ENCODE measurements at regions of chr11 and their contacts with region 1.

Region 1: GRCh38 chr11:6362873-6363678 is 27.2 kb upstream of the SMPD1 start:
- DNase-seq: peak; percentile 79 to 90 (median 87)
- ATAC-seq: peak; percentile 89 to 92 (median 92)
- H3K4me3 ChIP-seq: peak overlapping the region in 4 of 12 donors; percentile 18 to 31 (median 24)
- H3K27ac ChIP-seq: peak overlapping the region; percentile 66 to 97 (median 78)
- H3K4me1 ChIP-seq: peaks cover 0 to 16% (median 0%) of the 10 kb centered on the region in 12 donors
- H3K27me3 ChIP-seq: no peaks in the 10 kb centered on the region
- CTCF ChIP-seq: peak; percentile 78 to 92 (median 88)
- POLR2A ChIP-seq: no peak

Region 2: DNA sequence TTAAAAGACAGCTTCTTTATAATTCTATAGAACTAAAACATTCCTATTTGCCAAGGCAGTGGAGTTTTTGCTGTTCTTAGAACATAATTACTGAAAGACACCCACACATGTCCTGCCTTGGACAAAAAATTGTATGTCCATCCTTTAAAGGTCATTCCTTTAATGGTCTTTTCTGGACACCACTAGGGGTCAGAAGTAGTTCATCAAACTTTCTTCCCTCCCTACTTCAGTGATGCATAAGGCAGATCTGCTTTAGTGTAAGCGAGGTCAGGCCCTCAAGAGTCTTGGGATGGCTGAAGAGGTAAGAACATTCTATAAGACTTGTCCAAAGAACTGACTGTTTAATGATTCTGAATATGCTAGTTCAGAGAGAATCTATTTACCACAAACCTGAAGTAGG is 1158.3 kb before region 1 on chr11:
- intact Hi-C with region 1: loop called in 1 of 10 experiments (anchors 5 kb)
- DNase-seq: no peak
- ATAC-seq: peak in 2 of 4 donors; percentile 48 to 57
- H3K4me3 ChIP-seq: no peak overlapping the region
- H3K27ac ChIP-seq: no peak overlapping the region
- H3K4me1 ChIP-seq: no peaks in the 10 kb centered on the region
- H3K27me3 ChIP-seq: peaks cover 0 to 4% (median 0%) of the 10 kb centered on the region in 9 donors
- CTCF ChIP-seq: peak in 10 of 12 donors; percentile 20 to 51 (median 38)
- POLR2A ChIP-seq: no peak

Region 3: DNA sequence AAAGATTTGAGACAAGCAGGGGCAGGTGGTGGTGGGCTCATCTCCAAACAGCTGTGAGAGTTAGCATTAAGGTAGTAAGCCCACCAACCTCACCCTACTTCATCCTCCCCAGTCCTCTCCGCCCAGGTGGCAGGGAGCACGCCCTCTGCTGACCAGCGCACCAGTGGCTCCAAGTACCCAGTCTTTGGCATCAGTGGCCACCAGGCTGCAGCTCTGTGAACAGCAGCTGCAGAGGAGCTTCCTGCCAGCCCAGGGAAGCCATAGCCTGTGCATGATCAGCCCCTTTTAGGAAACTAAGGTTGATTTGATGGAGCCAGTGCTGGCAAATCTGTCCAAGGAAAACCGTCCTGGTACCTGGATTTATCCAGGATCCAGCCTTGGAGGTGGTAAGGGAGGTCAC is 64.5 kb before region 1 on chr11:
- intact Hi-C with region 1: loop called in 2 of 10 experiments (anchors 5 to 10 kb)
- DNase-seq: peak in 4 of 5 donors; percentile 35 to 69 (median 48)
- ATAC-seq: peak; percentile 75 to 93 (median 90)
- H3K4me3 ChIP-seq: no peak overlapping the region
- H3K27ac ChIP-seq: no peak overlapping the region
- H3K4me1 ChIP-seq: no peaks in the 10 kb centered on the region
- H3K27me3 ChIP-seq: no peaks in the 10 kb centered on the region
- CTCF ChIP-seq: peak; percentile 32 to 73 (median 56)
- POLR2A ChIP-seq: no peak